ENCODE measurements at regions of chr15 and their contacts with region 1.

Region 1: DNA sequence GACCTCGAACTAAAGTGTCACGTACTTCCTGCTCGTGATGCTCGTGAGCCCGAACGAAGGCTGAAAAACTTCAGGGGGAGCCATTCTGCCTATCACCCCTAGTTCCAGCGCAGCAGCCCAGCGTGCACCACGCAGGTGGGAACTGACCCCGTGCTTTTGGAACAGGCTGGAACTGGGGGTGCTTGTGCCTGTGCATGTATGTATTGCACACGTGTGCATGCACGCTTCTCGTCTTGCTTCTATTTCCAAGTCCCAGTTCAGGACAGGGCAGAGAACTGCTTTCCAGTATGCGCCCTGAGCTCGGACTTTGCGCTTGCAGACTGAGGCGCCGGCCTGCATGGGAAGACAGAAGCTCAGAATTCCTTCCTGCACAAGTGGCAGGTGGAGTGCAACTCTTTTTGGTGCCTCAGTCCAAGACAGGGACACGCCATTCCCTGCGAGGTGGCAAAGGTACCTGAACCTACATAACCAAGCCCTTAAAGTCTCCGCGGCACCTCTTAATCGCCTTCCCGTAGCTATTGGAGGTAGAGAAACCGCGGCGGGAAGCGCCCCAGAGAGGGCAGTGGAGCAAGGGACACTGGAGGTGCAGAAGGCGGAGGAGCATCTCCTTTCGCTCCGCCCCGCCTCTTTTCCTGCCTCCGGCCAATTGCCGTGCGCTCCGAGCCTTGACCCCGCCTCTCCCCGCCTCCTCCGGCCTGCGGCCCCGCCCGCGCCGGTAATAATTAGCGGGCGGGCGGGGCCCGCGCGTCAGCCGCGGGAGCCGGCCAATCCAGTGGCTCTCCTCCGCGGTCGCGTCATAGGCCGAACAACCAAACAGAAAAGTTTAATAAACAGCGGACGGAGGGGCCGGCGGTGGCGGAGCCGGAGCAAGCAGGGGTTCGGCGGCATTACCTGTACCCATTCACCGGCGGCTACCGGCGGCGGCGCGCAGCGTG is at the start of gene ZFAND6:
- DNase-seq: peak; percentile 89 to 95 (median 94)
- ATAC-seq: peak; percentile 80 to 82
- H3K4me3 Mint-ChIP-seq: peak within 1 kb of the TSS; percentile 88 to 98 (median 94)
- H3K27ac Mint-ChIP-seq: peak within 1 kb of the TSS; percentile 88 to 98 (median 95)
- H3K4me1 Mint-ChIP-seq: peaks cover 12 to 39% (median 29%) of the 10 kb centered on the region in 4 donors
- H3K27me3 Mint-ChIP-seq: no peaks in the 10 kb centered on the region
- polyA plus RNA-seq, gene ZFAND6: 100.0 to 105 (median 104) TPM

Region 2: DNA sequence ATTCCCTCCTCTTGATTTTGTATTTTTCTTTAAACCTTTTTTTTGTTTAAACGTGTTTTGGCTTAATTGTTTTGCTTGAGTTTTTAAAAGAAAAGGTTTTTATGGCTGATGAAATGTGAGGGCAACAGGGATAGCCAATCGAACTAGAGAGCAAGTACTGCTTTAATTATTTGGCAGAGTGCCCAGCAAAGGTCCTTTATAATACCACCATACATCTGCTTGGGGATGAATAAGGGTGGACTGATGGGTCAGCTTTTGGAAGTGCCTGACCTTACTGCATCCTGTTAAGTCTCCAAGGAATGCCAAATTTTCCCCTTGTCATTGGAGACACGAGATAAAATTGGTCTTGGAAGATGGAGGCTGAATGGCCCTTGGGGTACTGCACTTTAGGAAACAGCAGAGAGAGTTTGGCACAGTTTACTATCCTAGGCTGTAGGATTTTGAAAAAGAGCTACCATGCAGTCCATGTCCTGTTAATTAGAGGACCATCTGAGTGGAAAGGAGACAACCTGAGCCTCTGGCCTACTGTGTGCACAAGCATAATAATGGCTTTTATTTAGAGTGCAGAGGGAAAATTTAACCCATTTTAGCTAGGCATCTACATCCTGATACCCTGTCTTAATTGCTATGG is 142.5 kb before region 1 on chr15:
- POLR2A ChIA-PET with region 1: no interaction called
- DNase-seq: no peak
- ATAC-seq: no peak
- H3K4me3 Mint-ChIP-seq: no peak overlapping the region
- H3K27ac Mint-ChIP-seq: no peak overlapping the region
- H3K4me1 Mint-ChIP-seq: peaks cover 4 to 5% (median 4%) of the 10 kb centered on the region in 4 donors
- H3K27me3 Mint-ChIP-seq: no peaks in the 10 kb centered on the region

Region 3: GRCh38 chr15:79978655-79979514 is 80.2 kb before region 1 on chr15:
- POLR2A ChIA-PET with region 1: no interaction called
- DNase-seq: no peak
- ATAC-seq: no peak
- H3K4me3 Mint-ChIP-seq: peak overlapping the region in 1 of 10 donors; percentile 5
- H3K27ac Mint-ChIP-seq: peak overlapping the region in 4 of 10 donors; percentile 21 to 64 (median 32)
- H3K4me1 Mint-ChIP-seq: peaks cover 0 to 31% (median 2%) of the 10 kb centered on the region in 4 donors
- H3K27me3 Mint-ChIP-seq: no peaks in the 10 kb centered on the region

Region 4: GRCh38 chr15:80049046-80049445 is 10.1 kb before region 1 on chr15:
- POLR2A ChIA-PET with region 1: no interaction called
- DNase-seq: no peak
- ATAC-seq: no peak
- H3K4me3 Mint-ChIP-seq: no peak overlapping the region
- H3K27ac Mint-ChIP-seq: no peak overlapping the region
- H3K4me1 Mint-ChIP-seq: peaks cover 0 to 5% (median 0%) of the 10 kb centered on the region in 4 donors
- H3K27me3 Mint-ChIP-seq: no peaks in the 10 kb centered on the region

Region 5: GRCh38 chr15:80072285-80072994 is 13.3 kb after region 1 on chr15:
- POLR2A ChIA-PET with region 1: interaction called, 17 read pairs
- DNase-seq: peak in 5 of 10 donors; percentile 8 to 76 (median 57)
- ATAC-seq: peak; percentile 98 to 99
- H3K4me3 Mint-ChIP-seq: peak overlapping the region; percentile 78 to 89 (median 84)
- H3K27ac Mint-ChIP-seq: peak overlapping the region; percentile 3 to 84 (median 68)
- H3K4me1 Mint-ChIP-seq: peaks cover 27 to 87% (median 66%) of the 10 kb centered on the region in 4 donors
- H3K27me3 Mint-ChIP-seq: no peaks in the 10 kb centered on the region

Region 6: GRCh38 chr15:80152180-80152845 is 93.2 kb after region 1 on chr15:
- POLR2A ChIA-PET with region 1: interaction called, 21 read pairs
- DNase-seq: peak; percentile 60 to 96 (median 74)
- ATAC-seq: peak; percentile 66 to 71
- H3K4me3 Mint-ChIP-seq: peak overlapping the region; percentile 80 to 92 (median 86)
- H3K27ac Mint-ChIP-seq: peak overlapping the region; percentile 5 to 93 (median 88)
- H3K4me1 Mint-ChIP-seq: peaks cover 7 to 29% (median 12%) of the 10 kb centered on the region in 4 donors
- H3K27me3 Mint-ChIP-seq: no peaks in the 10 kb centered on the region